ENCODE measurements at regions of chr3 and their contacts with region 1.

Region 1: GRCh38 chr3:73547427-73548248 is 77.1 kb downstream of the PDZRN3 start:
- DNase-seq: no peak
- H3K4me3 ChIP-seq: peak overlapping the region in 1 of 3 donors; percentile 24
- H3K27ac ChIP-seq: peak overlapping the region; percentile 77 to 92
- H3K4me1 ChIP-seq: peaks cover 0 to 3% of the 10 kb centered on the region in 2 donors
- H3K27me3 ChIP-seq: no peaks in the 10 kb centered on the region
- CTCF ChIP-seq: no peak
- POLR2A ChIP-seq: no peak

Region 2: GRCh38 chr3:73484656-73485248 is 62.9 kb before region 1 on chr3:
- intact Hi-C with region 1: no loop called
- DNase-seq: no peak
- H3K4me3 ChIP-seq: no peak overlapping the region
- H3K27ac ChIP-seq: no peak overlapping the region
- H3K4me1 ChIP-seq: no peaks in the 10 kb centered on the region
- H3K27me3 ChIP-seq: no peaks in the 10 kb centered on the region
- CTCF ChIP-seq: no peak
- POLR2A ChIP-seq: no peak

Region 3: DNA sequence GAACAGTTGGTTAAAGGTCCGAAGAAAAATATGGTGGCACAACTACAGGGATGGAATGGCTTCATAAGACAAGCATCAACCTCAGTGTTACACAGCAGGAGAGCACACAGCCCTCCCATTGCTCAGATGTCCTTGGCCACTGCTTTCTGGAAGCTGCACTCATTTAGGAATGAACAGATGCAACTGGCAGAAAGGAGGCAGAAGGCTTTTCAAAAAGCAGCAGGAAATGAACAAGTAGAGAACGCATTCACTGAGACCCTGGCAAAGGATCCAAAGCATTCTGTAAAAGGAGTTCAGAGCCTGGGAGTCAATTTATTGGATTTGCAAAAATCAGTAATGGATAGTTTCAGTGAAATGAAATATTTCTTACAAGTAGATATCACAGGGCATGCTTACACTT is 24.0 kb before region 1 on chr3:
- intact Hi-C with region 1: loop called (anchors 2 kb)
- DNase-seq: no peak
- H3K4me3 ChIP-seq: no peak overlapping the region
- H3K27ac ChIP-seq: peak overlapping the region in 1 of 2 donors; percentile 4
- H3K4me1 ChIP-seq: peaks cover 0 to 5% of the 10 kb centered on the region in 2 donors
- H3K27me3 ChIP-seq: no peaks in the 10 kb centered on the region
- CTCF ChIP-seq: no peak
- POLR2A ChIP-seq: no peak

Region 4: GRCh38 chr3:73536952-73537351 is 10.7 kb before region 1 on chr3:
- intact Hi-C with region 1: no loop called
- DNase-seq: no peak
- H3K4me3 ChIP-seq: no peak overlapping the region
- H3K27ac ChIP-seq: no peak overlapping the region
- H3K4me1 ChIP-seq: peaks cover 0 to 5% of the 10 kb centered on the region in 2 donors
- H3K27me3 ChIP-seq: no peaks in the 10 kb centered on the region
- CTCF ChIP-seq: no peak
- POLR2A ChIP-seq: no peak

Region 5: DNA sequence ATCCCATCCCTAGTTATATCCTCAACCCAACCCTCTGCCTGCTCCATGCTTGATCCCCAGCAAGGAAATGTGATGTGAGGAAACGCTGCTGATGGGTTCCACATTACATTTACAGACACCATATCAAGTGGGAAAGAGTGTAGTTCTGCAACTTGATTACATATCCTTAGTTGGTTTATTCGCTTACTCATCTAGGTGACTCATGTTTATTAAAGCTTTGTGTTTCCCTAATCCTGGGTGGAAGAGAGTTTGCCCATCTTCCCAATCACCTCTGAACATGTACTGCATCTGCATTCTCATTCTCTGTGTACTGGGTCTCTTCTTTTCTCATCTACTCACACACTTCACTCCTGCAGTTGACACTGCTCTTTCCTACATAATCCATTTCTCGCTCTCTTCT is 168.8 kb after region 1 on chr3:
- intact Hi-C with region 1: no loop called
- DNase-seq: no peak
- H3K4me3 ChIP-seq: no peak overlapping the region
- H3K27ac ChIP-seq: no peak overlapping the region
- H3K4me1 ChIP-seq: peaks cover 8 to 11% of the 10 kb centered on the region in 2 donors
- H3K27me3 ChIP-seq: no peaks in the 10 kb centered on the region
- CTCF ChIP-seq: no peak
- POLR2A ChIP-seq: no peak

Region 6: GRCh38 chr3:73868688-73869315 is 321.2 kb after region 1 on chr3:
- intact Hi-C with region 1: no loop called
- DNase-seq: no peak
- H3K4me3 ChIP-seq: no peak overlapping the region
- H3K27ac ChIP-seq: no peak overlapping the region
- H3K4me1 ChIP-seq: no peaks in the 10 kb centered on the region
- H3K27me3 ChIP-seq: no peaks in the 10 kb centered on the region
- CTCF ChIP-seq: peak in 2 of 3 donors; percentile 43 to 50
- POLR2A ChIP-seq: no peak